ENCODE measurements at regions of chr6 and their contacts with region 1.

Region 1: GRCh38 chr6:57205550-57206328 is 16.4 kb downstream of the RAB23 start:
- DNase-seq: no peak
- ATAC-seq: no peak
- H3K4me3 ChIP-seq: no peak overlapping the region
- H3K27ac ChIP-seq: no peak overlapping the region
- H3K4me1 ChIP-seq: 0 out of 2 replicates have a peak, but pooled peaks cover 3% of the 10 kb centered on the region
- H3K27me3 ChIP-seq: no peaks in the 10 kb centered on the region
- CTCF ChIP-seq: no peak

Region 2: DNA sequence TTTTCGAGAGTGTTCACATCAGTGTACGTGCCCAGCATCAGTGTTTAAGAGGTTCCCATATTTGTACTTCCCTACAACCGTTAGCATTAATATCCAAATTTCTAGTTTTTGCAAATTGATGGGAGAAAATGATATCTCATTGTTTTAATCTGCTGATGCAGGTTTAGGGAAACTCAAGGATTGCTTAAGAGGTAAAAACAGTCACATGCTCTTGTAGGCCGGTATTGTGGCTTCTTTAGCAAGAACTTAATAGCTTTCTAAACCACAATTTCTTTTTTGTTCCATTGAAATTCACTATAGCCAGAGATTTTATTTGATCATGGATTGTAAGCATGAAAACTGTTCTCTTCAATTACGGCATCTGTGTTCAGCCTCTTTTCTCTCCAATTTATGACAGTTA is 221.4 kb before region 1 on chr6:
- CTCF ChIA-PET with region 1: no interaction called
- POLR2A ChIA-PET with region 1: no interaction called
- in situ Hi-C with region 1: no loop called
- intact Hi-C with region 1: no loop called
- DNase-seq: no peak
- ATAC-seq: no peak
- H3K4me3 ChIP-seq: no peak overlapping the region
- H3K27ac ChIP-seq: no peak overlapping the region
- H3K4me1 ChIP-seq: no peaks in the 10 kb centered on the region
- H3K27me3 ChIP-seq: no peaks in the 10 kb centered on the region
- CTCF ChIP-seq: no peak

Region 3: GRCh38 chr6:57190140-57190539 is 15.6 kb before region 1 on chr6:
- CTCF ChIA-PET with region 1: no interaction called
- POLR2A ChIA-PET with region 1: no interaction called
- in situ Hi-C with region 1: no loop called
- intact Hi-C with region 1: no loop called
- DNase-seq: no peak
- ATAC-seq: peak; percentile 81
- H3K4me3 ChIP-seq: no peak overlapping the region
- H3K27ac ChIP-seq: no peak overlapping the region
- H3K4me1 ChIP-seq: no peaks in the 10 kb centered on the region
- H3K27me3 ChIP-seq: no peaks in the 10 kb centered on the region
- CTCF ChIP-seq: peak; percentile 70; the same call in 1 of the 2 replicates

Region 4: DNA sequence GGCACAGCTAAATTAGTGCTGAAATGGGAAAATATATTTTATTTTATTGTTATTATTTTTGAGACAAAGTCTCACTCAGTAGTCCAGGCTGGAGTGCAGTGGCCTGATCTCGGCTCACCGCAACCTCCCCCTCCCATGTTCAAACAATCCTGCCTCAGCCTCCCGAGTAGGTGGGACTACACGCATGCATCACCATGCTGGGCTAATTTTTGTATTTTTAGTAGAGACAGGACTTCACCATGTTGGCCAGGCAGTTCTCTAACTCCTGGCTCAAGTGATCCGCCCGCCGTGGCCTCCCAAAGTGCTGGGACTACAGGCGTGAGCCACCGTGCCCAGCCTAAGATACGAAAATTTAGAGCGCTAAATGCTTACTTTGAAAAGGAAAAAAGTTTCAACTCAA is 11.5 kb after region 1 on chr6:
- CTCF ChIA-PET with region 1: no interaction called
- POLR2A ChIA-PET with region 1: interaction called, 18 read pairs
- in situ Hi-C with region 1: no loop called
- intact Hi-C with region 1: no loop called
- DNase-seq: no peak
- ATAC-seq: no peak
- H3K4me3 ChIP-seq: no peak overlapping the region
- H3K27ac ChIP-seq: no peak overlapping the region
- H3K4me1 ChIP-seq: 0 out of 2 replicates have a peak, but pooled peaks cover 3% of the 10 kb centered on the region
- H3K27me3 ChIP-seq: no peaks in the 10 kb centered on the region
- CTCF ChIP-seq: no peak

Region 5: DNA sequence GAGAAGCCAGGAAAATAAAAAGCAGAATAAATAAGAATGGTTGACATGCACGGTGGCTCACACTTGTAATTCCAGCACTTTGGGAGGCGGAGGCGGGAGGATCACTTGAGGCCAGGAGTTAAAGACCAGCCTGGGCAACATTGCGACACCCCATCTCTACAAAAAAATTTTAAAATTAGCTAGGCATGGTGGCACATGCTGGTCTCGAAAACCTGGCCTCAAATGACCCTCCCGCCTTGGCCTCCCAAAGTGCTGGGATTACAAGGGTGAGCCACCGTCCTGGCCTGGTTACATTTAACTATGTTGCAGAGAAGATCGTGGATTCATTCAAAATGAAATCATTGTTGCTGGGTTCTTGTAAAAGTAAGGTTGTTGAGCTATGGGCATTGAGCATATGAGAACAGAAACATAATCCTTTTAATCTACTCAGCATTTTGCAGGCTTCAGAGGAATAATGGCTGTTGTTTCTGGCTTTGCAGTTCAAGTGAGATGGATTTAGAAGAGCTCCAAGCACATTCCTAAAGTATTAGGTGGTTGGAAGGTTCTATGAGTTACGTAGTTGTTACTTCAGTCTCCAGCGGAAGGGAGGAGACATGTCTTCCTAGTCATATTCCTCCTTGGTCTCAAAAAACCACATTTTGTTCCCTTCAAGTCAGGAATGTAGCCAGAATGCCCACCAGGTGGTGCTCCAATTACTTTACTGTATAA is 62.0 kb after region 1 on chr6:
- CTCF ChIA-PET with region 1: no interaction called
- POLR2A ChIA-PET with region 1: no interaction called
- in situ Hi-C with region 1: no loop called
- intact Hi-C with region 1: no loop called
- DNase-seq: peak; percentile 67
- ATAC-seq: peak; percentile 91
- H3K4me3 ChIP-seq: no peak overlapping the region
- H3K27ac ChIP-seq: peak overlapping the region; percentile 52; the same call in 1 of the 2 replicates
- H3K4me1 ChIP-seq: no peaks in the 10 kb centered on the region; the same call in 1 of the 2 replicates
- H3K27me3 ChIP-seq: no peaks in the 10 kb centered on the region
- CTCF ChIP-seq: peak; percentile 68; the same call in 1 of the 2 replicates